Endothelial cell of umbilical vein (primary cell): ENCODE measurements at regions of chr4 and their contacts with region 1.

Region 1: GRCh38 chr4:88104902-88105610 is 53.4 kb downstream of the ABCG2 start:
- DNase-seq: peak; percentile 87
- H3K4me3 ChIP-seq: peak overlapping the region in 1 of 3 experiments; percentile 27
- H3K27ac ChIP-seq: peak overlapping the region; percentile 93
- H3K4me1 ChIP-seq: peaks cover 37% of the 10 kb centered on the region
- H3K27me3 ChIP-seq: no peaks in the 10 kb centered on the region
- CTCF ChIP-seq: no peak
- POLR2A ChIP-seq: no peak

Region 2: GRCh38 chr4:87669373-87669772 is 435.7 kb before region 1 on chr4:
- CTCF ChIA-PET with region 1: no interaction called
- POLR2A ChIA-PET with region 1: no interaction called
- dilution Hi-C with region 1: no loop called
- intact Hi-C with region 1: no loop called
- DNase-seq: no peak
- H3K4me3 ChIP-seq: no peak overlapping the region
- H3K27ac ChIP-seq: no peak overlapping the region
- H3K4me1 ChIP-seq: no peaks in the 10 kb centered on the region
- H3K27me3 ChIP-seq: no peaks in the 10 kb centered on the region
- CTCF ChIP-seq: no peak
- POLR2A ChIP-seq: no peak

Region 3: GRCh38 chr4:88007304-88008121 is 97.5 kb before region 1 on chr4 and contains the start of gene PKD2:
- CTCF ChIA-PET with region 1: no interaction called
- POLR2A ChIA-PET with region 1: no interaction called
- dilution Hi-C with region 1: no loop called
- intact Hi-C with region 1: loop called (anchors 5 kb)
- DNase-seq: peak; percentile 73
- H3K4me3 ChIP-seq: peak within 1 kb of the TSS; percentile 66 to 89 (median 88)
- H3K27ac ChIP-seq: peak within 1 kb of the TSS; percentile 68
- H3K4me1 ChIP-seq: peaks cover 23% of the 10 kb centered on the region
- H3K27me3 ChIP-seq: no peaks in the 10 kb centered on the region
- CTCF ChIP-seq: no peak
- POLR2A ChIP-seq: peak; percentile 82
- total RNA-seq, gene PKD2: 27.0 and 33.5 TPM in 2 replicates

Region 4: GRCh38 chr4:88070031-88070430 is 35.0 kb before region 1 on chr4:
- CTCF ChIA-PET with region 1: no interaction called
- POLR2A ChIA-PET with region 1: no interaction called
- dilution Hi-C with region 1: no loop called
- intact Hi-C with region 1: loop called (anchors 5 kb)
- DNase-seq: peak; percentile 79
- H3K4me3 ChIP-seq: no peak overlapping the region
- H3K27ac ChIP-seq: peak overlapping the region; percentile 9
- H3K4me1 ChIP-seq: peaks cover 10% of the 10 kb centered on the region
- H3K27me3 ChIP-seq: no peaks in the 10 kb centered on the region
- CTCF ChIP-seq: no peak
- POLR2A ChIP-seq: no peak

Region 5: DNA sequence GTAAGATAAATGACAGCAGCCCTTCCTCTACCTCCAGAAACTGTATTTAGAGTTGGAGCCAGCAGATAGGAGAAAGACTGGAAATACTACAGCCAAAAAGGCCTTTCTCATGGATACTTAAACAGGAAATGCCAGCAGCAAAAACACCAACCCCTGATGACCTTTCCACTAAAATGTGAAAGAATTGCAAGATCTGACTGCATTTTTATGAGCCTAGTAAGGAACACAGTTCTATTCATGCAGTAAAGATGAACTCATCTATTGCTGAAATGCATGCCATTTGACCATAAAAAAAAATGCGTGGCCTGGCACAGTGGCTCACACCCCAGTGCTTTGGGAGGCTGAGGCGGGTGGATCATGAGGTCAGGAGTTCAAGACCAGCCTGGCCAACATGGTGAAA is 33.5 kb after region 1 on chr4:
- CTCF ChIA-PET with region 1: no interaction called
- POLR2A ChIA-PET with region 1: no interaction called
- dilution Hi-C with region 1: no loop called
- intact Hi-C with region 1: loop called (anchors 2 kb)
- DNase-seq: peak; percentile 64
- H3K4me3 ChIP-seq: no peak overlapping the region
- H3K27ac ChIP-seq: no peak overlapping the region
- H3K4me1 ChIP-seq: peaks cover 12% of the 10 kb centered on the region
- H3K27me3 ChIP-seq: no peaks in the 10 kb centered on the region
- CTCF ChIP-seq: no peak
- POLR2A ChIP-seq: no peak

Region 6: DNA sequence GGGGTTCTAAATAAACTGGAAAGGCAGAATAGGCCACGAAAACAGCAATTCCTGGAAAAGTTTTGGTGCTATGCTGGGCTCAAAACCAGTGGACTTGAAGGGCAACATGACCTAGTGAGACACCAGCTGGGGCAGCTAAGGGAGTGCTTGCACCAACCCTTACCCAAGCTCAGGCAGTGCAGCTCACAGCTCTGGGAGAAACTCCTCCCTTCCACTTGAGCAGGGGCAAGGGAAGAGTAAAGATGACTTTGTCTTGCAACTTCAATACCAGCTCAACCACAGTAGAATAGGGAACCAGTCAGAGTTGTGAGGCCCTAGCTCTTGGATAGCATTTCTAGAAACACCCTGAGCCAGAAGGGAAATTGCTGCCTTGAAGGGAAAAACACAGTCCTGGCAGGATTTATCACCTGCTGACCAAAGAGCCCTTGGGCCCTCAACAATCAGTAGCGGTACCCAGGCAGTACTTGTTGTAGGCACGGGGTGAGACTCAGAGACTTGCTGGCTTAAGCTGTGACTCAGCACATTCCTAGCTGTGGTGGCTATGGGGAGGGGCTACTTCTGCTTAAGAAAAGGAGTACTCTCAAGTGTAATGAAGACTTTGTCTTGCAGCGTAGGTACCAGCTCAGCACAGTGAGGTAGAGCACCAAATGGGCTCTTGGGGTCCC is 73.0 kb after region 1 on chr4:
- CTCF ChIA-PET with region 1: no interaction called
- POLR2A ChIA-PET with region 1: no interaction called
- dilution Hi-C with region 1: no loop called
- intact Hi-C with region 1: loop called (anchors 2 kb)
- DNase-seq: peak; percentile 52
- H3K4me3 ChIP-seq: no peak overlapping the region
- H3K27ac ChIP-seq: no peak overlapping the region
- H3K4me1 ChIP-seq: peaks cover 2% of the 10 kb centered on the region
- H3K27me3 ChIP-seq: no peaks in the 10 kb centered on the region
- CTCF ChIP-seq: no peak
- POLR2A ChIP-seq: no peak

Region 7: DNA sequence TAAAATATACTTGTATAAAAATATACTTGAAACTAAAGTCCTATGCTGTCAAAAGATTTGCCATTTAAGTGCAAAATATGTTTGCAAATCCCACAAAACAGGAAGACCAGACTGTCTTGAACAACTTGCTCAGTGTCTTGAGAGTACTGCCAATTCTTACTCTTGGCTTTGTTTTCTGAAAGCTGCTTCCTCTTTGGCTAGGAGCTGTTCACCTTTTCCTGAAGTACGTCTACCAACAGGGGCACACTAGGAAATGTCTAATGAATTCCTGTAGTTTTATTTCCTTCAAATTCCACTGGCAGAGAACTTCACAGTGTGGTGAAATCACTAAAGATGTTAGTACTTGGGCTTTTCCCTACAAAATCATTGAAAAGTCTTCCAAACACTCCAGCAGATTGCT is 99.8 kb after region 1 on chr4:
- CTCF ChIA-PET with region 1: no interaction called
- POLR2A ChIA-PET with region 1: no interaction called
- dilution Hi-C with region 1: no loop called
- intact Hi-C with region 1: loop called (anchors 2 kb)
- DNase-seq: peak; percentile 90
- H3K4me3 ChIP-seq: peak overlapping the region in 1 of 3 experiments; percentile 28
- H3K27ac ChIP-seq: peak overlapping the region; percentile 48
- H3K4me1 ChIP-seq: peaks cover 15% of the 10 kb centered on the region
- H3K27me3 ChIP-seq: no peaks in the 10 kb centered on the region
- CTCF ChIP-seq: peak in 1 of 2 donors; percentile 5
- POLR2A ChIP-seq: no peak

Region 8: GRCh38 chr4:88591787-88592599 is 486.9 kb after region 1 on chr4 and contains the start of gene HERC3:
- CTCF ChIA-PET with region 1: no interaction called
- POLR2A ChIA-PET with region 1: no interaction called
- dilution Hi-C with region 1: no loop called
- intact Hi-C with region 1: loop called (anchors 10 kb)
- DNase-seq: peak; percentile 93
- H3K4me3 ChIP-seq: peak within 1 kb of the TSS; percentile 60 to 81 (median 80)
- H3K27ac ChIP-seq: peak within 1 kb of the TSS; percentile 56
- H3K4me1 ChIP-seq: peaks cover 9% of the 10 kb centered on the region
- H3K27me3 ChIP-seq: no peaks in the 10 kb centered on the region
- CTCF ChIP-seq: peak in 1 of 2 donors; percentile 12
- POLR2A ChIP-seq: no peak
- total RNA-seq, gene HERC3: 21.2 and 25.6 TPM in 2 replicates